Ascending aorta (tissue), 2 donors: ENCODE measurements at regions of chr4 and their contacts with region 1.

Region 1: GRCh38 chr4:114386637-114387233 is 211.9 kb upstream of the UGT8 start:
- DNase-seq: no peak
- H3K4me3 ChIP-seq: no peak overlapping the region
- H3K27ac ChIP-seq: no peak overlapping the region
- H3K4me1 ChIP-seq: no peaks in the 10 kb centered on the region
- H3K27me3 ChIP-seq: no peaks in the 10 kb centered on the region
- CTCF ChIP-seq: peak in 2 of 3 experiments; percentile 31 to 48

Region 2: DNA sequence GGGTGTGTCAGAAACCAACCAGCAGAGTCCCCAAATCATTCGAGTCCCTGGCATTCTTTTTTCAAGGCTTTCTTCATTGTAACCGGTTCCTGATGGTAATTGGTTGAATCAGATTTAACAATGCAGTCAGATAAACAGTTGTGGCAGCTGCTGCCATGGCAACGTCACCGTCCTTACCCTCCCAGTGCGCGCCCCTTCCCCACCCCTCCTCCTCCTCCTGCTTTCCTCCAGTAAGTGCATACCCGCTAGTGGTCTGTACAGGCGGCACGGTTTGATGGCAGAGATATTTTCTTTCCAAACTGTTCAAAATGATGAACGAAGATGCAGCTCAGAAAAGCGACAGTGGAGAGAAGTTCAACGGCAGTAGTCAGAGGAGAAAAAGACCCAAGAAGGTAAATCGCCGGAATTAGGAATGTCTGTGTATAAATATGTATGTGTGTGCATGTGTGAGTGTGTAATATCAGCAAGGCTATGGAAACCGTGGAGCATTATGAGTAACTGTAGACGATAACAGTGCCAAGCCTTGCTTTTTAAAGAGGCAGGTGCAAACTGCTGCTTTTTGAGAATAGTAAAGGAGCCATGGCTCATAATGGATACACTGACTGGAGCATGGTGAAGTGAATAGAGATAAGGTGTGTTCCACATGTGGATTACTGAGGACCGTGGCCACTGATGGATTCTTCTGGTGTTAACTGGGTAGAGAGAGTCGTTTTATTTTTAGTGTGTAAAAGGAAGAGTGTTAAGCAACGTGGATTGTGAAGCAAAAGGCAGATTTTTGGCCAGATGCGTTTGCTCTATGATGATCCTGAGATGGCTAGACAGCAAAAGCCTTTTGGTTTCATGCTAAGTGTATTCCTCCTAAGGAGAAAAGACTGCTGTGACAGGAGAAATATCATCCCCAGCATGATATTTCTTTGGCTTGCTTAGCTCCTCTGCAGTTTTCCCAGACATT is 1337.0 kb before region 1 on chr4 and contains the start of gene ANK2:
- intact Hi-C with region 1: no loop called
- DNase-seq: no peak
- H3K4me3 ChIP-seq: peak within 1 kb of the TSS in 1 of 2 donors; percentile 27
- H3K27ac ChIP-seq: no peak within 1 kb of the TSS
- H3K4me1 ChIP-seq: no peaks in the 10 kb centered on the region
- H3K27me3 ChIP-seq: no peaks in the 10 kb centered on the region
- CTCF ChIP-seq: no peak
- total RNA-seq, gene ANK2: 9.4 TPM

Region 3: DNA sequence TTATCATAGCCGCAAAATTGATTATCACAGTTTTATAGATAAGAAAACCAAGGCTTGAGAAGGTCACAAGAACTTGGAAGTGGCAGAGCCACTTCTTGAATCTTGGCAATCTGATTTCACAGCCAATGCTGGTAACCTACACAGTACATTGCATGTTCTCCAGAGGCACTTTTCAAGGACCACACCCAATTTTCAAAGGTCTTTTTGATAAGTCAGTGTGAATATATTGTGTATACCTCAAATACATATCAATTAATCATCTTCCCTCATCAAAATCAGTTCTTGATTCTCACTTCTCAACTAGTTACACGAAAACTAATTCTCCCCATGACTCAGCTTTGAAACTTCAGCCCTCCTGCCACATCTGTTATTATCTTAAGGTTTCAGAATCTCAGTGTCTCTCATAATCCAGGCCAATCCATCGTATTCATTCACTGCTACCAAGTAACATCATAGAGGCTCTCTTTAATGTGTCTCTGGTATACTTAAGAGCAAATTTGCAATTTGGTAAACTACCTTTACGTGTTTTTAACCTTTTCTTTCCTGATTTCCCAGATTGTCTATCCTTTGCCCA is 642.0 kb before region 1 on chr4:
- intact Hi-C with region 1: no loop called
- DNase-seq: no peak
- H3K4me3 ChIP-seq: no peak overlapping the region
- H3K27ac ChIP-seq: no peak overlapping the region
- H3K4me1 ChIP-seq: no peaks in the 10 kb centered on the region
- H3K27me3 ChIP-seq: no peaks in the 10 kb centered on the region
- CTCF ChIP-seq: no peak

Region 4: GRCh38 chr4:114296126-114296525 is 90.6 kb before region 1 on chr4:
- intact Hi-C with region 1: no loop called
- DNase-seq: no peak
- H3K4me3 ChIP-seq: no peak overlapping the region
- H3K27ac ChIP-seq: no peak overlapping the region
- H3K4me1 ChIP-seq: no peaks in the 10 kb centered on the region
- H3K27me3 ChIP-seq: no peaks in the 10 kb centered on the region
- CTCF ChIP-seq: no peak

Region 5: DNA sequence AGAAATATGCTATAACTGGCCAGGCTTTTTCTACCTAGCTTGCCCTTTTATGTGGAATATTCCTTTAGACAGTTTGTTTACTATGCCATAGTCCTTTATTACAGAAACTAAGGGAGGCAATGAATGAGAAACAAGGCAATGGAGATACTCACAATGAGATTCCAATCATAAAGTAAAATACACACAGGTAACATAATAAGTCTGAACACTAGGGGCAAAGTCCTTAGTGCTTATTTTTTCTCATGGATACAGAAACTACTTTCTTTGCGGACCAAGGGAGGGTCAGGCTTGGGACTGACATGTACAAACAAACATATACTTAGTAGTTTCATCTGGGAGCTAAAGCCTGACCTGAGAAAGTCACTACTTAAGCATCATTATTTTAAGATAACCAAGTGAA is 195.9 kb after region 1 on chr4:
- intact Hi-C with region 1: no loop called
- DNase-seq: no peak
- H3K4me3 ChIP-seq: no peak overlapping the region
- H3K27ac ChIP-seq: no peak overlapping the region
- H3K4me1 ChIP-seq: no peaks in the 10 kb centered on the region
- H3K27me3 ChIP-seq: no peaks in the 10 kb centered on the region
- CTCF ChIP-seq: no peak

Region 6: GRCh38 chr4:114694770-114695169 is 308.0 kb after region 1 on chr4:
- intact Hi-C with region 1: loop called (anchors 2 kb)
- DNase-seq: no peak
- H3K4me3 ChIP-seq: no peak overlapping the region
- H3K27ac ChIP-seq: no peak overlapping the region
- H3K4me1 ChIP-seq: no peaks in the 10 kb centered on the region
- H3K27me3 ChIP-seq: no peaks in the 10 kb centered on the region
- CTCF ChIP-seq: peak; percentile 17 to 52 (median 51)